Sigmoid colon (tissue), 7 donors: ENCODE measurements at regions of chr6 and their contacts with region 1.

Region 1: DNA sequence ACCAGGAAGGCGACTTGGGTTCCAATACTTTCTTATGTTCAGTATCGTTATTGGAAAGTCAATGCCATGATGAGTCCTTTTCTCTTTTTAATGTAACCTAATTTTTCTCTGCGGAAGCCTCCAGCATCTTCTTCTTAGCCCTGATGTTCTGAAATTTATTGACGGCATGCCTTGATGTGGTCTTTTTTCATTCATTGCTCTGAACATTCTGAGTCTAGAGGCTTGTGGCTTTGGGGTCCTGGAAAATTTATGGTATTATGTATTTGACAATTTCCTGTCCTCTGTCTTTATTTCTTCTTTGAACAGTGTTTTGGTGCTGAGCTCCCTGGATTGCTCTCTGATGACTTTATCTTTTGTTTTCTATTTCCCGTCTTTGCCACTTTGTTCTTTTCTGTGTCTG is 28.7 kb upstream of the MAS1 start:
- DNase-seq: no peak
- H3K4me3 ChIP-seq: no peak overlapping the region
- H3K27ac ChIP-seq: no peak overlapping the region
- H3K4me1 ChIP-seq: no peaks in the 10 kb centered on the region
- H3K27me3 ChIP-seq: no peaks in the 10 kb centered on the region
- CTCF ChIP-seq: no peak
- EP300 ChIP-seq: no peak
- POLR2A ChIP-seq: no peak

Region 2: DNA sequence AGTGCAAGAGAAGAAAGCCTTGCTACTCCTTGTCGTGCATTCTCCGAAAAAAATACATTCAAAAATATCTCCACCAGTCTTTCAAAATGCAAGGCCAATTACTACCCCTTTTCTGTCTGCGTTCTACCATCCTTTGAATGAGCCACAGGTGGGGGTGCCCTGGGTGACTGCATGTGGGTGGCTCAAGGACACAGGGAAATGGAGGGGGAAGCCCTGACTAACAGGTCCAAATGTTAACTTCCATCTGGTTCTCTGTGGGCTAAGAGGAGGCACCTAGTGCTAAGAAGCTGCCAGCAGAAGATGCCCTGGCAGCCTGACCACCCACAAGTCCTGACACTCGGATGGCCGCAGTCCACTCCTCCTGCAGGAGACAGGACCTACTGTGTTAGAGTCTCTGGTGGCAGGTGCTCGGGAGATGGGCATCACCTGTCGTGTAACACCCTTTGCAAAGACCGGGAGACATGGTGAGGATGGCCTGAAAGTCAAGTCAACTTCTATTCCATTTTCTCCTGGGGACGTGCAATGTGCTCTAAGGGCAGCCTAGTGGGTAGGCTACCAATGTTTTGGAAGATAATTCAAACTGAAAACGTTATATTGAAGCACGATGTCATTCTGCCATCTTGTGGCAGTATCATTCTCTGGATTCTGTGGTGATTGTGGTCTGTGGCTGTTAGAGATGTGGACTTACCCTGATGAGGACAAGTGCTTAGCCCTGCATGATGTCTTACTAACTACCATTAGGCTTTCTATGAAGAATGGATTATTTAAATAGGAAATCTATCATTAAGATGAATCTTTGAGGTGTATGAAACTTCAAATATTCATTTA is 79.4 kb after region 1 on chr6:
- intact Hi-C with region 1: loop called (anchors 10 kb)
- DNase-seq: no peak
- H3K4me3 ChIP-seq: no peak overlapping the region
- H3K27ac ChIP-seq: no peak overlapping the region
- H3K4me1 ChIP-seq: no peaks in the 10 kb centered on the region
- H3K27me3 ChIP-seq: no peaks in the 10 kb centered on the region
- CTCF ChIP-seq: no peak
- EP300 ChIP-seq: no peak
- POLR2A ChIP-seq: no peak

Region 3: DNA sequence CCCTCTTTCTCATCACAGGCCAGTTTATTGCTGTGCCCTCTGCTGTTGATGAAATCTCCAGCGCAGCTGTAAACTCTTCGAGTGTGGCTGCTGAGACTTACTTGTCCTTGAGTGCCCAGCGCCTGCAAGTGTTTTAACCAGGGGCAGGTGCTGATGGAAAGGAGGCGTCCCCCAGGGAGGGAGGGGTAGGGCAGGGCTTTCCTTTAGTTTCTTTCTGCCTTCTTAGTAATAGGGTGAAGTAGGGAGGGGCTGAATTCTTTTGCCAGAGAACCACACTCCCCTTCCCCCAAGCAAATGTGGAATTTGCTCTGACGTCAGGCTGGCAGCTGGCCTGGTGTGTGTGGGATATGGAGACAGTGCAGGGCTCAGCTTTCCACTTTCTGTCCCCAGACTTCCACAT is 168.0 kb after region 1 on chr6:
- intact Hi-C with region 1: loop called (anchors 10 kb)
- DNase-seq: peak; percentile 91
- H3K4me3 ChIP-seq: peak overlapping the region in 2 of 4 donors; percentile 1 to 14
- H3K27ac ChIP-seq: peak overlapping the region; percentile 72 to 82 (median 76)
- H3K4me1 ChIP-seq: peaks cover 0 to 22% (median 18%) of the 10 kb centered on the region in 4 donors
- H3K27me3 ChIP-seq: no peaks in the 10 kb centered on the region
- CTCF ChIP-seq: no peak
- EP300 ChIP-seq: peak in 1 of 4 donors; percentile 58
- POLR2A ChIP-seq: no peak